ENCODE measurements at regions of chr5 and their contacts with region 1.

Region 1: DNA sequence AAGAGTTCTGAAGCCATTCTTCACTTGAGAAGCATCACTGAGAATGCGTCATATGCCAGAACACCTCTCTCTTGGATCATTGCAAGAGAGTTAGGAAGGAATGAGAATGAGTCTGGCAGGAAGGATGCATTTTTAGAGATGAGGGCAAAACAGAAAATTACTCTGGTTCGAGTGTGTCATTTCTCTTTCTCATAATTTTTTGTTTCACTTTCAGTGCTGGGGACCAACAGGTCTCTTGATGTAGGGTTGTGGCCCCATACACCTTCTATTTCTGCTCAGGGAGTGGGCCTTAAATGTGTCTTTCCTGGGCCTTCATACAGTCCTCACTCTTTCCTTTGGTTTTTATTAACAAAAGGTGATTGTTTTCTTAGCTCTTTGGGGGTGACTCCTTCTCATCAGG is 302.4 kb downstream of the NR3C1 start:
- DNase-seq: peak; percentile 23
- H3K4me3 Mint-ChIP-seq: no peak overlapping the region
- H3K27ac Mint-ChIP-seq: peak overlapping the region; percentile 90
- H3K4me1 Mint-ChIP-seq: peaks cover 40% of the 10 kb centered on the region
- H3K27me3 Mint-ChIP-seq: no peaks in the 10 kb centered on the region

Region 2: GRCh38 chr5:143023411-143024096 is 77.6 kb before region 1 on chr5:
- CTCF ChIA-PET with region 1: no interaction called
- POLR2A ChIA-PET with region 1: no interaction called
- intact Hi-C with region 1: loop called (anchors 2 kb)
- DNase-seq: peak; percentile 85
- H3K4me3 Mint-ChIP-seq: no peak overlapping the region
- H3K27ac Mint-ChIP-seq: peak overlapping the region; percentile 59
- H3K4me1 Mint-ChIP-seq: peaks cover 53% of the 10 kb centered on the region
- H3K27me3 Mint-ChIP-seq: no peaks in the 10 kb centered on the region

Region 3: DNA sequence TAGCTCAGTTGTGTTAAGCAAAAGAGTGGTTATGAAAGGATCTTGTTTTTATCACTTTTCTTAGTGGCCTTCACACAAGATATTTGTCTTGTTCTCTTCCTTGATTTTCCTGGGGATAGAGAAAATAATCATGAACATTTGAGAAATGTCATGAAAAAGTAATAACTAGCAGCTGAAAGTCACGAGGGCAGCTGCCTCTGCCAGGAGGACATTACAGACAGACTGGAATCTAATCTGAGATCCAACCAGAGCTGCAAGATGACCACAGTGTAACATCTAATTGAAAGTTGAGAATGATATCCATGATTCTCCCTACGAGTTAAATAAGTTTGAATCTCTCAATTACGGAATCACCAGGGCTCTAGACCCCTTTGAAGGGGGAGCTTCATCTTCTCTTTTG is 56.1 kb before region 1 on chr5:
- CTCF ChIA-PET with region 1: no interaction called
- POLR2A ChIA-PET with region 1: no interaction called
- intact Hi-C with region 1: no loop called
- DNase-seq: no peak
- H3K4me3 Mint-ChIP-seq: no peak overlapping the region
- H3K27ac Mint-ChIP-seq: no peak overlapping the region
- H3K4me1 Mint-ChIP-seq: peaks cover 14% of the 10 kb centered on the region
- H3K27me3 Mint-ChIP-seq: no peaks in the 10 kb centered on the region

Region 4: DNA sequence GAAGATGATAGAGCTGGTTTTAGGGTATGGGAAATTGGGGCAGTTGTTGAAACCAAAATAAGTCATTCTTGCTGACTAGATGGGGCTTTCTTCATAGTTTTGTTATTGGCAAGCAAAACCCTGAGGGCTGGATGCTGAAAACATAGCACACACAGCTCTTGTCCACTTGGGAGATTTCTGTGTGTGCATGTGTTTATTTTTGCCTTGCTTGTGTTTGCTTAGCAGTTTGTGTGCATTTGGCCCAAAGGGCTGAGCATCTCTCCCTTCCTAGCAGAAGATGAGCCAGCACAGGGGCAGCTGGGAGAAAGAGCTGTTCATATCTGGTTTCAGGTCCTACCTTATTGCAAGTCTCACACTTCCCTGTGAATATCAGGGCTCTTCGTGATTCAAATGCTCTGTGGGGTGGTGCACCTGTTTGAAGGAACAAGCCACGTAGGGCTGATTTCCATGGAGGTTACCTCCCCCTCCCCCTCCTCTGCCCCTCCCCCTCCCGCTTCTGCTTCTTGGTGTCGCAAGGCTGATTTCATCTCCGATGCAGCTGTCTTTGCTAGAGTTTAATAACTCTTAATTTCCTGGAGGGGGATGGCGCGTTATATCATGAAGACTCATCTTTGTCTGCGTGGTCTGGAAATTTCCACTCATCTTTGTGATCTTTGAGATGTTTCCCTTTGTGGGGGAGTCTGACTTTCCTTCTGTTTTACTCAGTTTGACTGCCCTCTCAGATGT is 34.4 kb before region 1 on chr5:
- CTCF ChIA-PET with region 1: no interaction called
- POLR2A ChIA-PET with region 1: interaction called, 3 read pairs
- intact Hi-C with region 1: loop called (anchors 1 kb)
- DNase-seq: peak; percentile 62
- H3K4me3 Mint-ChIP-seq: no peak overlapping the region
- H3K27ac Mint-ChIP-seq: peak overlapping the region; percentile 75
- H3K4me1 Mint-ChIP-seq: peaks cover 37% of the 10 kb centered on the region
- H3K27me3 Mint-ChIP-seq: no peaks in the 10 kb centered on the region

Region 5: GRCh38 chr5:143119291-143119769 is 18.2 kb after region 1 on chr5:
- CTCF ChIA-PET with region 1: interaction called, 7 read pairs
- POLR2A ChIA-PET with region 1: interaction called, 4 read pairs
- intact Hi-C with region 1: loop called (anchors 1 kb)
- DNase-seq: peak; percentile 27
- H3K4me3 Mint-ChIP-seq: no peak overlapping the region
- H3K27ac Mint-ChIP-seq: peak overlapping the region; percentile 82
- H3K4me1 Mint-ChIP-seq: peaks cover 41% of the 10 kb centered on the region
- H3K27me3 Mint-ChIP-seq: no peaks in the 10 kb centered on the region

Region 6: GRCh38 chr5:143206196-143207053 is 105.3 kb after region 1 on chr5:
- CTCF ChIA-PET with region 1: no interaction called
- POLR2A ChIA-PET with region 1: no interaction called
- intact Hi-C with region 1: loop called (anchors 2 kb)
- DNase-seq: peak; percentile 65
- H3K4me3 Mint-ChIP-seq: peak overlapping the region; percentile 5
- H3K27ac Mint-ChIP-seq: peak overlapping the region; percentile 73
- H3K4me1 Mint-ChIP-seq: peaks cover 35% of the 10 kb centered on the region
- H3K27me3 Mint-ChIP-seq: peaks cover 2% of the 10 kb centered on the region